Breast epithelium (tissue), 4 donors: ENCODE measurements at regions of chr17 and their contacts with region 1.

Region 1: DNA sequence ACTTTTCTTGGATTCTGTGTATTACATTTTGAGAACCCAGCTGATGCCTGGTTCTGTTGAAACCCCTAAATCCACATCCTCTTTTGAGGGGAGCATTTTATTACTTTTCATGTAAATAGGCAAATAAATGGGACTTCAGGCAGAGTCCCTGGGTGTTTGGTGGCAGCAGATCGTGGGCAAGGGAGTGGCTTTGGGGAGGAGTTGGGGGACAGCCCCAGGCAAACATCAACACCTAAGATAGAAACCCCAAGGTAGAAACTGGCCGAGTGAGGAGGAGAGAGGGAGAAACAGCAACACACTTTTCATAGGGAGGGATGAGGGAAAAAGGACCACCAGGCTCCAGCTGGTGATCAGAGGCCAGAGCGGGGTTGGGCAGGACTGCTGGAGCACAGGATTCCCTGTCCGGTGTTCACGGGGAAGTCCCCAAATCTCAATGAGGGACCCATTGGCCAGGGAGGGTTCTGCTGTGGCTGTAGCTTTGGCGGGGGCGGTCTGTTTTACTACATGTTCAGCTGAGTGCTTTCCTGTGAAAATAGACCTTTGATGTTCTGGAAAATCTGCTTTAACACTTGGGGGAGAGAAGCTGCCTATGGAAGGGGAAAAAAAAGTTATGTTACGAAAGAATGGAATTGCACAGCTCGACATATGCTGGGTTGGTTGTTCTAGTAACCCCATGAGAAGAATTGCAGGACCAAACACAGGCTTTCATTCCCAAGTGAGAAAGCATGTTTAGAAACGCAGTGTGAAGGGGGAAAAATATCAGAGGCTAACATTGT is 46.6 kb downstream of the MSI2 start:
- DNase-seq: no peak
- H3K4me3 ChIP-seq: no peak overlapping the region
- H3K27ac ChIP-seq: no peak overlapping the region
- H3K4me1 ChIP-seq: no peaks in the 10 kb centered on the region
- H3K27me3 ChIP-seq: no peaks in the 10 kb centered on the region
- CTCF ChIP-seq: no peak
- POLR2A ChIP-seq: no peak

Region 2: DNA sequence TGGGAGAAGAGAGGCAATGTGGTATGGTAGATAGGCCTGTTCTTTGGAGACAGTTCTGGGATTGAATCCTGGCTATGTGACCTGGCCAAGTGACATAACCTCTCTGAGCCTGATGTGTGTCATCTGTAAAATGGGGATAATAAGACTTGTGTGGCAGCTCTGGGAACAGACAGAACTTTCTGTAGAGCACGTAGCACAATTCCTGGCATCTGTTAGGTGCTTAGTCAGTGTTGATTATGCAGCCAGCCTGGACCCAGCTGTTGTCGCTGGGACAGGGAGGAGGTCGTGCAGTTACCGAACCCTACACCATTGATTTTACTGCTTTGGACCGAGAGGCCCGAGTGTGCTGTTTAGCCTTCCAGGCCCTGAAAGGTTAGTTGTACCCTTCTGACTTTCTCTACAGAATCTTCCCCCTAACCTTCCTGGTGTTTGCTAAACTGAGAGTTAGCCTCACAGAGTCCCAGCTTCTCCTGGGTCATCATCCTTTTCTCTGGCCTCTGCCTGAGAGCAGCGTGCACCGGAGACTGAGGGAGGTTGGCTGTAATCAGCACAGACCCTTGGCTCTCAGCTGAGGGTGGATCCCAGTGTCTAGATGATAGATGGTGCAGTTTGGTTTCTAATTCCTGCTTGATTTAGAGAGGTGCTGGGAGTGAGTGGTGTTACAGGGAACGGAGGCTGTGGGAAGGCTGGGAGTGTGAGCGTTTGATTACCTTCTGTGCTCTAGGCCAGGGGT is 14.7 kb before region 1 on chr17:
- intact Hi-C with region 1: no loop called
- DNase-seq: no peak
- H3K4me3 ChIP-seq: no peak overlapping the region
- H3K27ac ChIP-seq: peak overlapping the region; percentile 69 to 82
- H3K4me1 ChIP-seq: no peaks in the 10 kb centered on the region
- H3K27me3 ChIP-seq: no peaks in the 10 kb centered on the region
- CTCF ChIP-seq: no peak
- POLR2A ChIP-seq: no peak

Region 3: DNA sequence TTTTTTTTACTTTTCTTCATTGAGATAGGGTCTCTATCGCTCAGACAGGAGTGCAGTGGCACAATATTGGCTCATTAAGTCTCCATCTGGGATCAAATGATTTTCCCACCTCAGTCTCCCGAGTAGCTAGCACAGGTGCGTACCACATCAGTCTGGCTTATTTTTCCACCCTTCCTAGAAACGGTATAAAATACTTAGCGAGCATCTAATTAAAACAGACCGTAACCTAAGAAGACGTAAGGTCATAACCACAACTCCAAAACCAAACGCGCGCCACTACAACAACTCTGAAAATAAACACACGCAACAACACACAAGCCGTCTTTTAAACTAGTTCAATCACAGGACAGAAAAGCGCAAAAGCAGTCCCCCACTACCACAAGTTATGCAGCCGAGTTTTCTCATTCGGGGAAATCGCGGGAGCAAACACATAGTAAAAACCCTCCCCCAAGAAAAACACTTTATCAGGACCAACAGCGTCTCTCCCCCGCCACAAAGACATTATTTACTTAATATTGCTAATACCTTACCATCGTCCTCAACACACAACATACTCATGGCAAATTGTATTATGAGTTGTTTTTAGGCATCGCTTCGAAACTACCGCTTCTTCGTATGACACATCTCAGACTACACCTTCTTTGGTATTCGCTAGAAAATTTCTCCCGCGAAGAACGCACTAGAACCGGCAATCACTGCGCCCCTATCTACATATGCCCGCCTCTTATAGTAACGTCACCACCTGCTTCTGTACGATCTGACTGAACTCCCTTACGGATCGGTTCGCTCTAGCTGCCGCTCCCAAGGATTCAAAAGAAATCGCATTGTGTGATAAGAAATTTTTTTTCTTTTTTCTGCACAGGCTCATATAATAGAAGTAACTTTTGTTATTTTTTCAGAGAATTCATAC is 1356.2 kb after region 1 on chr17:
- intact Hi-C with region 1: loop called (anchors 5 kb)
- DNase-seq: peak; percentile 77 to 83
- H3K4me3 ChIP-seq: peak overlapping the region; percentile 27 to 62 (median 46)
- H3K27ac ChIP-seq: peak overlapping the region; percentile 88 to 89
- H3K4me1 ChIP-seq: no peaks in the 10 kb centered on the region
- H3K27me3 ChIP-seq: no peaks in the 10 kb centered on the region
- CTCF ChIP-seq: peak in 1 of 3 donors; percentile 23
- POLR2A ChIP-seq: peak; percentile 89